Heart left ventricle (tissue), 16 donors: ENCODE measurements at regions of chr2 and their contacts with region 1.

Region 1: DNA sequence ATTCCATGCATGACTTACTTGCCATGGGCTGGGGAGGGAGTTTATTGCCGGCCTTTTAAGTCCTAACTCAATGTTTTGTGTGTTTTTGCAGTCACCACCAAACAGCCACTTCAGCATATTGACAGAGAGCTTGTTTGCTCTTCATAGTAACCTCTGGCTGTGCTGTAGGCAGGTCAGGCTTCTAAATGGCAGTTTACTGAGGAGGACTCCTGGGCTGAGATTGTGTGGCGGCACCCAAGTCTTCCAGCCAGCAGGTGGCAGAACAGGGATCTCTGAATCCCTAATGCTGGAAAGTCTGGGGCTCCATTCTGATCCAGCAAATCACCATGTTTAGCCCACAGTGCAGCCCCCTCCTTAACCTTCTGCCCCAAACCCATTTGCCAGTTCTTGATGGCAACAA is 121.2 kb downstream of the CAPN13 start:
- DNase-seq: no peak
- ATAC-seq: peak in 1 of 4 donors; percentile 11
- H3K4me3 ChIP-seq: no peak overlapping the region
- H3K27ac ChIP-seq: peak overlapping the region in 2 of 12 donors; percentile 20 to 29
- H3K4me1 ChIP-seq: peaks cover 0 to 38% (median 16%) of the 10 kb centered on the region in 12 donors
- H3K27me3 ChIP-seq: no peaks in the 10 kb centered on the region
- CTCF ChIP-seq: peak in 10 of 12 donors; percentile 5 to 33 (median 16)
- POLR2A ChIP-seq: no peak

Region 2: DNA sequence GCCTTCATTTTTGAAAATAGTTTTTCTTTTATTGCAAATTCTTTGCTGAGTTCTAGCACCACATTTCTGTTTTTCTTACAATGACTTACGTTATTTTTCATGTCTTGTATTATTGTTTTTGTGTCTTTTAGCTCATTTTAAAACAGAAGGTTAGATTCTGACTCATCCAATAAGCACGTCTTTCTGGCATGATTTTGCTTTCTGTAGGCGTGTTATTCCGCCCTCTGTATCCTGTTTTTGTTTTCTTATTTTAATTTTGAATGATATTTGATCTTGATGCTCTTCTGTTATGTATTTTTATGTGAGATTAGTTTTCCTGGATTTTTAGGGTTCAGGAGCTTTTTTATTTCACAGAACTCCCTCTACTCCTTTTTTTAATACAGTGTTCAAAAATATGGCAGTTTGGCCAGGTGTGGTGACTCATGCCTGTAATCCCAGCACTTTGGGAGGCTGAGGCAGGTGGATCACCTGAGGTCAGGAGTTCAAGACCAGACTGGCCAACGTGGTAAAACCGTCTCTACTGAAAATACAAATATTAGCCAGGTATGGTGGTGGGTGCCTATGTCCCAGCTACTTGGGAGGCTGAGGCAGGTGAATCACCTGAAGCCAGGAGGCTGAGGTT is 1425.7 kb before region 1 on chr2:
- intact Hi-C with region 1: no loop called
- DNase-seq: no peak
- ATAC-seq: no peak
- H3K4me3 ChIP-seq: no peak overlapping the region
- H3K27ac ChIP-seq: no peak overlapping the region
- H3K4me1 ChIP-seq: no peaks in the 10 kb centered on the region
- H3K27me3 ChIP-seq: peaks cover 0 to 10% (median 0%) of the 10 kb centered on the region in 9 donors
- CTCF ChIP-seq: no peak
- POLR2A ChIP-seq: no peak

Region 3: DNA sequence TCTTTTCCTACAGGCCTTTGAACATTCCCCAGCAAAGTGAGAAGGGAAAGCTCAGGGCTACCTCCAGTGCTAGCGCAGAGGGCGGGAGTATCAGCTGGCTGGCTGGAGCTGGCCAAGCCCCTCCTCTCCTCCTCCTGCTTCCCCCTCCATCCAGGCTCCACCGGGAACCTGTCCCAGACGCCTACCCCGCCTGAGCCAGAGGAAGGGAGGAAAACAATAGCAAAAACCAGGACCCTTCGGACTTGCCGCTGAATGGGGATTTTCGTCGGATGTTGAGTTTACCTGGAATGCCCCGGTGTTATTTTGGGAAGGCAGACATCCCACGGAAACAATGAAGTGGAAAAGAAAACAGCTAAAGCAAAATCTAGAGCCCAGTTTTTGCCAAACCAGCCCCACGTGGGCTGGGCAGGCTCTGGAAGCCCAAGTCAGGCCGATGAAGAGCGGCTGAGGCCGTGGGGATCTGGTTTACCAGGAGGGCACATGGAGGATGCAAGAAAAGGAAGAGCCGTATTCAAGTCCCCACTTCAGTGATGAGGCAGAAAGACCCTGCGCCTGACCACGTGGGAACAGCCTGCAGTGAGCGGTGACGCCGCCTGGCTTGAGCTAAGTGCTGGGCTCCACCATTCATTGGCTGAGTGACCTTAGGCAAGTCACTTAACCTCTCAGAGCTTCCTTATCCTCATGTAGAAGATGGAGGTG is 339.4 kb before region 1 on chr2:
- intact Hi-C with region 1: loop called in 5 of 10 experiments (anchors 5 kb)
- DNase-seq: peak; percentile 85 to 92 (median 88)
- ATAC-seq: peak; percentile 96 to 98 (median 96)
- H3K4me3 ChIP-seq: peak overlapping the region; percentile 5 to 63 (median 54)
- H3K27ac ChIP-seq: peak overlapping the region; percentile 69 to 96 (median 86)
- H3K4me1 ChIP-seq: peaks cover 8 to 55% (median 37%) of the 10 kb centered on the region in 12 donors
- H3K27me3 ChIP-seq: no peaks in the 10 kb centered on the region
- CTCF ChIP-seq: no peak
- POLR2A ChIP-seq: peak in 1 of 2 donors; percentile 69

Region 4: GRCh38 chr2:30447149-30448045 is 238.6 kb before region 1 on chr2 and contains the start of gene LCLAT1:
- intact Hi-C with region 1: loop called in 1 of 10 experiments (anchors 10 kb)
- DNase-seq: peak; percentile 87 to 93 (median 87)
- ATAC-seq: peak; percentile 84 to 98 (median 98)
- H3K4me3 ChIP-seq: peak within 1 kb of the TSS; percentile 68 to 99 (median 91)
- H3K27ac ChIP-seq: peak within 1 kb of the TSS; percentile 49 to 91 (median 86)
- H3K4me1 ChIP-seq: peaks cover 0 to 30% (median 13%) of the 10 kb centered on the region in 12 donors
- H3K27me3 ChIP-seq: no peaks in the 10 kb centered on the region
- CTCF ChIP-seq: peak in 3 of 12 donors; percentile 8 to 20 (median 10)
- POLR2A ChIP-seq: peak in 1 of 2 donors; percentile 59
- total RNA-seq, gene LCLAT1: 32.6 to 70.2 (median 46.9) TPM

Region 5: DNA sequence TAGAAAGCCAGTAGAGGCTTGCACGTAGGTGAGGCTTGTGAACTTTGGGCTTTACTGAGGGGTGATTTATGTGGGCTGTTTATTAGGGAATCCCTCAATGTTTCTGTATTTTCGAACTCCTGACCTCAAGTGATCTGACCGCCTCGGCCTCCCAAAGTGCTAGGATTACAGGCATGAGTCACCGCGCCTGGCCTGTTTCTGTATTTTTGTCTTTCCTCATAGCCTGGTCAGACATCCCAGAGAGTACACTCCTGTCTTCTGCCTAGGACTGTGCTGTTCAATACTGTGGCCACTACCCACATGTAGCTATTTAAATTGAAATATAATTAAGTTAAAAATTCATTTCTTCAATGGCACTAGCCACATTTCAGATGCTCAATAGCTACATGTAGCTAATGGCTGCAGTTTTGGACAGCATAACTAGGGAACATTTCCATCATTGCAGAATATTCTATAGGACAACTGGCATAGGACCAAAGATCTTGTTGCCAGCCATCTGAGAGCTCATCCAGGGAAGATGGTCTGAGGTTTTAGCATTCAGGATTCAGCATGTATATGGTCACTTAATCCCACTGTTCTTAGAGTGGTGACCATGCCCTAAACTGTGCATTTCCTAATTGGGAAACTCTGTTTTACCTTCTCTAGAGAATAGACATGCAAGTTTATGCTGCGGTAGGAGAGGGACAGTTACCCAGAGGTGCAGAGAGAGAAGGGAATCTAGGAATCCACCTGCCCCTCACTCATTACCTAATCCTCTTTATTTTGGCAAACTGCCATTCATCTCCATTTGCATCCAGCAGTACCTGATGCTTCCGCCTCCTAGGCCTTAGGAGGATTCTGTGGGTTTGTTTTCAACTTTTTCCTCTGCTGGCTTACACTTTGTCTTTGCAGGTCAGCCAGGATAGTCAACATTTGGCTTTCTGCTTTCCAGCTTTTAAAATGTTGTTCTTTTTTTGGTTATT is 174.6 kb before region 1 on chr2:
- intact Hi-C with region 1: loop called in 1 of 10 experiments (anchors 5 kb)
- DNase-seq: peak; percentile 45 to 63 (median 55)
- ATAC-seq: peak; percentile 73 to 87 (median 82)
- H3K4me3 ChIP-seq: no peak overlapping the region
- H3K27ac ChIP-seq: peak overlapping the region in 11 of 12 donors; percentile 45 to 80 (median 60)
- H3K4me1 ChIP-seq: peaks cover 3 to 62% (median 38%) of the 10 kb centered on the region in 12 donors
- H3K27me3 ChIP-seq: no peaks in the 10 kb centered on the region
- CTCF ChIP-seq: no peak
- POLR2A ChIP-seq: no peak

Region 6: GRCh38 chr2:30584116-30584515 is 101.9 kb before region 1 on chr2:
- intact Hi-C with region 1: loop called in 1 of 10 experiments (anchors 10 kb)
- DNase-seq: no peak
- ATAC-seq: peak; percentile 66 to 77 (median 67)
- H3K4me3 ChIP-seq: no peak overlapping the region
- H3K27ac ChIP-seq: peak overlapping the region; percentile 44 to 81 (median 73)
- H3K4me1 ChIP-seq: peaks cover 0 to 47% (median 15%) of the 10 kb centered on the region in 12 donors
- H3K27me3 ChIP-seq: no peaks in the 10 kb centered on the region
- CTCF ChIP-seq: no peak
- POLR2A ChIP-seq: no peak

Region 7: GRCh38 chr2:30590407-30590806 is 95.6 kb before region 1 on chr2:
- intact Hi-C with region 1: loop called in 2 of 10 experiments (anchors 10 kb)
- DNase-seq: no peak
- ATAC-seq: no peak
- H3K4me3 ChIP-seq: no peak overlapping the region
- H3K27ac ChIP-seq: peak overlapping the region in 5 of 12 donors; percentile 15 to 68 (median 32)
- H3K4me1 ChIP-seq: peaks cover 0 to 28% (median 15%) of the 10 kb centered on the region in 12 donors
- H3K27me3 ChIP-seq: no peaks in the 10 kb centered on the region
- CTCF ChIP-seq: no peak
- POLR2A ChIP-seq: no peak

Region 8: DNA sequence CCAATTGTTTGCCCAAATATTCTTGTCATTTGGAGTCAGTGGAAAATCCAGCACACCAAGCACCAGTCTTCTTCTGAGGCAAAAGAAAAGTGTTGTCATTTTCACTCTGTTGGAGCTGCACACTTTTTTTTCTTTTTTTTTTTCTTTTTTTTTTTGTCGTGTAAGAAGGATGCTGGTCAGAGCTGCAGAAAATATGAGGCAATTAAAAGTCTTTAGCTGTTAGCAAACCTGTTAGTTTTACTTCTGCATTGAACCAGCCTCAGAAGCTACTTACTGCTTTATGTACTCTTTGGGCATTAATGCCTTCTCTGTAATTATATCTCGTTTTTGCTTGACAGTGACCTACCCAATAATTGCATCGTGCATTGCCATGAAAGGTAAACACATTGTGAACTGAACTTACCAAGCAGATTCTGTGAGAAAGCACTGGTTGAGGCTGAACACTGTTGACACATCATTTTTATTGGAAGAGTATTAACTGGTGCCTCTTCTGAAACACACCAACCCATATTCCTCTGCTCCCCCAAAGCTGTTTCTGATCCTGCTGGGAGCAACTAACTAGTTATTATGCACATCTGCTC is 44.1 kb before region 1 on chr2:
- intact Hi-C with region 1: no loop called
- DNase-seq: no peak
- ATAC-seq: no peak
- H3K4me3 ChIP-seq: no peak overlapping the region
- H3K27ac ChIP-seq: no peak overlapping the region
- H3K4me1 ChIP-seq: no peaks in the 10 kb centered on the region
- H3K27me3 ChIP-seq: no peaks in the 10 kb centered on the region
- CTCF ChIP-seq: no peak
- POLR2A ChIP-seq: no peak

Region 9: GRCh38 chr2:30756047-30756719 is 70.2 kb after region 1 on chr2:
- intact Hi-C with region 1: no loop called
- DNase-seq: no peak
- ATAC-seq: no peak
- H3K4me3 ChIP-seq: no peak overlapping the region
- H3K27ac ChIP-seq: no peak overlapping the region
- H3K4me1 ChIP-seq: no peaks in the 10 kb centered on the region
- H3K27me3 ChIP-seq: peaks cover 0 to 39% (median 0%) of the 10 kb centered on the region in 9 donors
- CTCF ChIP-seq: no peak
- POLR2A ChIP-seq: no peak